ENCODE measurements at regions of chr9 and their contacts with region 1.

Region 1: DNA sequence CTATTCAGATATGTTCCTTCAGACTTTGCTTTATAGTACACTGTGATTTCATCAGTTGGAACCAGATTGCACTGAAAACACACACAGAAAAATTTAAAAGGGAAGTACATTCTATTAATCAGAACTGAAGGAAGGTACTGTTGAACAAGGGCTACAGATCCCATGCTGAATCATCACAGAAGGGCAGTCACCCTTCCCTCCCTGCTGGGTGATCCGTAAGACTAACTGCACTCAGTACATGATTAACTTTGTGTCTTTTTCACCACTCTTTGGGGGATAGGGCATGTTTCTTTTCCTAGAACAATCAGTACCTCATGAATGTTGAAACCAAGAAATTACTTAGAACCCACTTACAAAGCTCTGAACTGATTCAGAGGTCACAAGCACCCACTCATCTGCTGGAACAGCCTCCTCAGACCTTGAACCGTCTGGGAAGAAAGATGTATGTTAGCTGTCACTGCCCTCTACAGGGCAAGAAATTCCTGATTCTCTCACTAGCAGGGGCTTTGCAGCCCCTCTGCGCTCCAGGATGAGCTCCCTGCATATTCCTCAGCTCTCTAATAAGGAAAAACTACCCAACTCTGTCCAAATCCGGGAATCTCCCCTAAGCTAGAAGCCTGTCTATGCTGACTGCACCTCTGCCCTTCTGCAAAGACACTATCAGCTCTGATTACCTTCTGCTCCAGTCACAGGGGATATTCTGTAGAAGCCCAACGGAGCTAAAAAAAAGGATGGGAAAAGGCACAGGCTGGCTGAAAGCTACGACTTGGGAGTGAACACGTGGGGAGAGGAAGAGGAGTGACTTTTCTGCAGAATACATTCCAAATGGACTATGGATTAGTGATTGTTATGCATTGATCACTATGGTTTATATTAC is 51.0 kb downstream of the IARS1 start:
- DNase-seq: no peak
- H3K4me3 ChIP-seq: no peak overlapping the region
- H3K27ac ChIP-seq: no peak overlapping the region
- H3K4me1 ChIP-seq: no peaks in the 10 kb centered on the region
- H3K27me3 ChIP-seq: no peaks in the 10 kb centered on the region
- CTCF ChIP-seq: 0 out of 2 replicates have a peak, but pooled peaks have one; percentile 32

Region 2: DNA sequence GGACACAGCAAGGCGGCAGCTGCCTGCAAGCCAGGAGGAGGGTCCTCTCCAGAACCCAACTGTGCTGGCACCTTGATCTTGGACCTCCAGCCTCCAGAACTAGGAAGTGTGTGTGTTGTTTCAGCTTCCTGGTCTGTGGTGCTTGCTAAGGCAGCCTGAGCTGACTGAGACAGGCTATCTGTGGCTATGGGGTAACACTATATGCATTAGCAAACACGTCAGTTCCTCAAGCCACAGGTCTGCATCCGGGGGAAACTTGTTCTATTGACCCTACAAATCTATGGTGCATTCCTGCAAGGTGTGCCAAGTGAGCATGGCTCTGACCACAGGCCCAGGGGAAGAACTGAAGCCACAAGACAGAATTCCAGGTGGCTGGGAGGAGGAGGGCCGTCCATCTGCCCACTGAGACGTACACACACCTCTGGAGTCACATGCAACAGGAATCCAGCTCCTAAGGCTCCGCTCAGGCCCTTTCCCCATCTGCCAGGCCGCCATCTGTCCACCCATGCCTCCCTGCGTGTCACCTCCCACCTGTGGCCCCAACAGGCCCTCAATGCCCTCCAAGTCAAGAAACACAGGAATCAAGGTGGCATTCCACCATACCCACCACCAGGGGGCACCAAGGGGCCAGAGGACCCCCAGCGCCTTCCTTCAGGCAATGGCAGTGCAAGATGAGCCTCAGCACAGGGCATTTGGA is 467.3 kb before region 1 on chr9:
- CTCF ChIA-PET with region 1: no interaction called
- POLR2A ChIA-PET with region 1: no interaction called
- intact Hi-C with region 1: no loop called
- DNase-seq: peak; percentile 77
- H3K4me3 ChIP-seq: no peak overlapping the region
- H3K27ac ChIP-seq: no peak overlapping the region
- H3K4me1 ChIP-seq: peaks cover 10% of the 10 kb centered on the region
- H3K27me3 ChIP-seq: no peaks in the 10 kb centered on the region
- CTCF ChIP-seq: peak; percentile 92

Region 3: GRCh38 chr9:92276331-92277032 is 34.0 kb after region 1 on chr9:
- CTCF ChIA-PET with region 1: no interaction called
- POLR2A ChIA-PET with region 1: no interaction called
- intact Hi-C with region 1: loop called (anchors 5 kb)
- DNase-seq: no peak
- H3K4me3 ChIP-seq: no peak overlapping the region
- H3K27ac ChIP-seq: no peak overlapping the region
- H3K4me1 ChIP-seq: no peaks in the 10 kb centered on the region
- H3K27me3 ChIP-seq: no peaks in the 10 kb centered on the region
- CTCF ChIP-seq: no peak

Region 4: DNA sequence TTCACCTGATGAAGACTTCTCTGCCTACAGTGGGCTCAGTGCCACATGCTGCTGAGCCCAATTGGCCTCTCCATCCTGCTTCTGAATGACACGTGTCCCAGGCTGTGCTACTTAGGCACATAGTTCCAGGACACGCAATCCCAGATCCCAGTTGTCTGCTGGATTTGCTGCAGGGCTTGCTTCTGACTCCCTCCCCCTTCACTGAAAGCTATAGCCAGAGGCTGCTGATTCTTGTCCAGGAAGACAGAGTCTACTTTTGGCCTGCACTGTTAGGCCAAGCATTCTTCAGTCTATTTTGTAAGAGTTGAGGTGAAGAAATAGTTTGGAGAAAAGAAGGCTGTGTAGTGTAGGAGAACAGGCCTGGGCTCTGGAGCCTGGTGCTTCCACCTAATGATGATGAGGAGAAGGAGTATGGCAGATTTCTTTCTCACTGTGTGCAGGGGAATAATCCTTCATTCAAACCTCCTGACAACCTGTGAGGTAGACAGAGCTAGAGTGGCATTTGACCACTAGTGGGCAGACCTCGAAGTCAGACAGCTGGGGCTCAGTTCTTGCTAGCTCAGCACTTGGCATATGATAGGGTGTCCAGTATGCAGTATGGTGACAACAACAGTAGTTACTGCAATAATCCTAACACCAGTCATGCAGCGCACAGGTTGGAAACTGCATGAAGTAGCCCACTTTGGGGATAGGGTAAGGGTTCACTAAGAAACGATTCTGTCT is 259.3 kb after region 1 on chr9:
- CTCF ChIA-PET with region 1: no interaction called
- POLR2A ChIA-PET with region 1: no interaction called
- intact Hi-C with region 1: no loop called
- DNase-seq: peak; percentile 30
- H3K4me3 ChIP-seq: no peak overlapping the region
- H3K27ac ChIP-seq: no peak overlapping the region
- H3K4me1 ChIP-seq: no peaks in the 10 kb centered on the region
- H3K27me3 ChIP-seq: no peaks in the 10 kb centered on the region
- CTCF ChIP-seq: peak; percentile 65